Caco-2 (cell line): ENCODE measurements at regions of chr22 and their contacts with region 1.

Region 1: GRCh38 chr22:39496131-39496838 is 5.8 kb upstream of the MIEF1 start:
- DNase-seq: peak in 1 of 2 experiments; percentile 55
- H3K4me3 ChIP-seq: no peak overlapping the region
- H3K4me3 Mint-ChIP-seq: no peak overlapping the region
- H3K27ac Mint-ChIP-seq: no peak overlapping the region
- H3K4me1 ChIP-seq: peaks cover 6% of the 10 kb centered on the region; the same call in 1 of the 2 replicates
- H3K4me1 Mint-ChIP-seq: peaks cover 30% of the 10 kb centered on the region
- H3K27me3 ChIP-seq: no peaks in the 10 kb centered on the region
- H3K27me3 Mint-ChIP-seq: no peaks in the 10 kb centered on the region
- CTCF ChIP-seq: peak; percentile 48 to 55

Region 2: GRCh38 chr22:39405346-39406085 is 90.8 kb before region 1 on chr22:
- CTCF ChIA-PET with region 1: no interaction called
- POLR2A ChIA-PET with region 1: interaction called, 15 read pairs
- intact Hi-C with region 1: no loop called
- DNase-seq: no peak
- H3K4me3 ChIP-seq: no peak overlapping the region
- H3K4me3 Mint-ChIP-seq: no peak overlapping the region
- H3K27ac Mint-ChIP-seq: no peak overlapping the region
- H3K4me1 ChIP-seq: no peaks in the 10 kb centered on the region
- H3K4me1 Mint-ChIP-seq: no peaks in the 10 kb centered on the region
- H3K27me3 ChIP-seq: no peaks in the 10 kb centered on the region
- H3K27me3 Mint-ChIP-seq: no peaks in the 10 kb centered on the region
- CTCF ChIP-seq: no peak

Region 3: GRCh38 chr22:39514373-39514973 is 18.2 kb after region 1 on chr22:
- CTCF ChIA-PET with region 1: interaction called, 11 read pairs
- POLR2A ChIA-PET with region 1: interaction called, 4 read pairs
- intact Hi-C with region 1: no loop called
- DNase-seq: peak in 1 of 2 experiments; percentile 80
- H3K4me3 ChIP-seq: no peak overlapping the region
- H3K4me3 Mint-ChIP-seq: no peak overlapping the region
- H3K27ac Mint-ChIP-seq: no peak overlapping the region
- H3K4me1 ChIP-seq: peaks cover 13% of the 10 kb centered on the region; the same call in 1 of the 2 replicates
- H3K4me1 Mint-ChIP-seq: peaks cover 28% of the 10 kb centered on the region
- H3K27me3 ChIP-seq: no peaks in the 10 kb centered on the region
- H3K27me3 Mint-ChIP-seq: no peaks in the 10 kb centered on the region
- CTCF ChIP-seq: peak; percentile 67 to 72